Activated CD4-positive, alpha-beta memory T cell treated with anti-CD3 and anti-CD28 coated beads for 36 hours (primary cell): ENCODE measurements at regions of chr21 and their contacts with region 1.

Region 1: GRCh38 chr21:36927719-36928117 is 38.8 kb downstream of the HLCS start:
- DNase-seq: peak; percentile 84
- H3K4me3 Mint-ChIP-seq: no peak overlapping the region
- H3K27ac Mint-ChIP-seq: no peak overlapping the region
- H3K4me1 Mint-ChIP-seq: peaks cover 7% of the 10 kb centered on the region
- H3K27me3 Mint-ChIP-seq: no peaks in the 10 kb centered on the region

Region 2: DNA sequence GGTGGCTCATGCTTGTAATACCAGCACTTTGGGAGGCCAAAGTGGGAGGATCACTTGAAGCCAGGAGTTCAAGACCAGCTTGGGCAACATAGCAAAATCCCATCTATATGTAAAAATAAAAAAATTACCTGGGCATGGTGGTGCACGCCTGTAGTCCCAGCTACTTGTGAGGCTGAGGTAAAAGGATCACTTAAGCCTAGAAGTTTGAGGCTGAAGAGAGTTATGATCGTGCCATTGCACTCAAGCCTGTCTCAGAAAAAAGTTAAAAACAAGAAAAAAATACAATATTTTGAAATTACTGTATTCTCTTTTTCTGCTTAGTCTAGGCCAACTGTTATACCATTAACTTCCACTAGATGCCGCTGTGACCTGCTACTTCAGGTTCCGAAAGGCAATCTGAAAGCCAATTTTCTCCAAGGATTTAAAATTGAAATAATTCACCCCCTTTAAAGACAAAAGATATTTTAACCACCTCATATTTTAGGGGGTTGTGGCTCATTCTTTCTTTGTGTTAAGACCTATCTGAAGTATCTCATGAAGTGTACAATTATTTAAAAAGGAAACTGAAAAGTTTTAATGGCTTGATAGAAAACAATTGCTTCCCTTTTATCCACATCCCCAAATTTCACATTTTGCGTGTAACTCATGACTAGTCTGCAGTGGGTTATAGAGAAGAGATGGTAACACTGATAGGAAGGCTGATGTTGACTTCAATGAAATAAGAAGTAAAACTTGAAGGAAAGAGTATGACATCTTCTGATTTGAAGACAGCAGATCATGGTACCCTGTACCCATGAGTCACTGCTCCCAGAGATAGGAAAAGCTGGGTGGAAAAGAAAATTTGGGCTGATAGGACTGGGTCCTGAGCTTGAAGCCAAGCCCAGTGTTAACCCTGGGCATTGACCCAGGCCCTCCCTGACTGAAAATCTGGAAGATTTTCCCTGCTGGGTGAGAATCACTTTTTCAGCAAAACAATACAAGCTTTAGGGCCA is 423.4 kb before region 1 on chr21:
- CTCF ChIA-PET with region 1: interaction called, 6 read pairs
- POLR2A ChIA-PET with region 1: no interaction called
- intact Hi-C with region 1: loop called (anchors 1 kb)
- DNase-seq: peak; percentile 33
- H3K4me3 Mint-ChIP-seq: no peak overlapping the region
- H3K27ac Mint-ChIP-seq: no peak overlapping the region
- H3K4me1 Mint-ChIP-seq: no peaks in the 10 kb centered on the region
- H3K27me3 Mint-ChIP-seq: peaks cover 7% of the 10 kb centered on the region

Region 3: DNA sequence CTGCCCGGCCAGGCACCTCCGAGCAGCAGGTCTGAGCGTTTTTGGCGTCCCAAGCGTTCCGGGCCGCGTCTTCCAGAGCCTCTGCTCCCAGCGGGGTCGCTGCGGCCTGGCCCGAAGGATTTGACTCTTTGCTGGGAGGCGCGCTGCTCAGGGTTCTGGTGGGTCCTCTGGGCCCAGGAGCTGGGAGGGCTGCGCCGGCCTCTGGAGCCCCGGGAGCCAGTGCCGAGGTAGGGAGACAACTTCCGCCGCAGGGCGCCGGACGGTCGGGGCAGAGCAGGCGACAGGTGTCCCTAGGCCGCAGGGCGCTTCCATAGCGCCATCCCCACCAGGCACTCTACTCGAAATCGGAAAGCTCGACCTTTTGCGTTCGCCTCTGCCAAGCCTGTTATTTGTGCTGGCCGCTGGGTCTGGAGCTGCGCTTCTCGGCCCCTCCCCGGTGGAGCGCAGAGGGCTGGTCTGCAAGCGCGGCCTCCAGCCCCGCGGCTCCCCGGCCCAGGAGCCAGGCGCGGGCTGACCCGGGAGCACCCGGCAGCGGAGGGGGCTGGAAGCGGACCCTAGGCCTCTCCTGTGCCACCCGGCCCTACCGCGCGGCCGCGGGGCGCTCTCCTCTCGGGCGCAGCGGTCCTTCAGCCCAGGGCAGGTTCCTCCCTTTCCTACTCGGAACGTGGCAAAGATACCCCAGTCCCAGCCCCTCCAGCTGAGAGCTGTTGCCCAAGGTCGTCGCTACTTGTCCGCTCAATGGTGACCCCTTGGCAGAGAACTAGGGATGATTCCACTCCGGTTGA is 226.6 kb before region 1 on chr21:
- CTCF ChIA-PET with region 1: interaction called, 3 read pairs
- POLR2A ChIA-PET with region 1: no interaction called
- intact Hi-C with region 1: loop called (anchors 5 kb)
- DNase-seq: peak; percentile 20
- H3K4me3 Mint-ChIP-seq: peak overlapping the region; percentile 57
- H3K27ac Mint-ChIP-seq: no peak overlapping the region
- H3K4me1 Mint-ChIP-seq: peaks cover 30% of the 10 kb centered on the region
- H3K27me3 Mint-ChIP-seq: peaks cover 66% of the 10 kb centered on the region

Region 4: DNA sequence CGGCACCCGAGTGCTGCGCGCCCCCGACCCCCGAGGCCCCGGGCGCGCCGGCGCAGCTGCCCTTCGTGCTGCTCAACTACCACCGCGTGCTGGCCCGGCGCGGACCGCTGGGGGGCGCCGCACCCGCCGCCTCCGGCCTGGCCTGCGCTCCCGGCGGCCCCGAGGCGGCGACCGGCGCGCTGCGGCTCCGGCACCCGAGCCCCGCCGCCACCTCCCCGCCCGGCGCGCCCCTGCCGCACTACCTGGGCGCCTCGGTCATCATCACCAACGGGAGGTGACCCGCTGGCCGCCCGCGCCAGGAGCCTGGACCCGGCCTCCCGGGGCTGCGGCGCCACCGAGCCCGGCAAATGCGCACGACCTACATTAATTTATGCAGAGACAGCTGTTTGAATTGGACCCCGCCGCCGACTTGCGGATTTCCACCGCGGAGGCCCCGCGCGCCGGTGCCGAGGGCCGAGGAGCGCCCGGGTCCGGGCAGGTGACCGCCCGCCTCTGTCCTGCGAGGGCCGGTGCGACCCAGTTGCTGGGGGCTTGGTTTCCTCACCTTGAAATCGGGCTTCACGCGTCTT is 179.8 kb before region 1 on chr21:
- CTCF ChIA-PET with region 1: interaction called, 37 read pairs
- POLR2A ChIA-PET with region 1: no interaction called
- intact Hi-C with region 1: loop called (anchors 1 kb)
- DNase-seq: peak; percentile 68
- H3K4me3 Mint-ChIP-seq: peak overlapping the region; percentile 63
- H3K27ac Mint-ChIP-seq: no peak overlapping the region
- H3K4me1 Mint-ChIP-seq: peaks cover 15% of the 10 kb centered on the region
- H3K27me3 Mint-ChIP-seq: peaks cover 45% of the 10 kb centered on the region

Region 5: GRCh38 chr21:36873513-36873912 is 54.2 kb before region 1 on chr21:
- CTCF ChIA-PET with region 1: no interaction called
- POLR2A ChIA-PET with region 1: no interaction called
- intact Hi-C with region 1: no loop called
- DNase-seq: no peak
- H3K4me3 Mint-ChIP-seq: no peak overlapping the region
- H3K27ac Mint-ChIP-seq: no peak overlapping the region
- H3K4me1 Mint-ChIP-seq: no peaks in the 10 kb centered on the region
- H3K27me3 Mint-ChIP-seq: no peaks in the 10 kb centered on the region

Region 6: DNA sequence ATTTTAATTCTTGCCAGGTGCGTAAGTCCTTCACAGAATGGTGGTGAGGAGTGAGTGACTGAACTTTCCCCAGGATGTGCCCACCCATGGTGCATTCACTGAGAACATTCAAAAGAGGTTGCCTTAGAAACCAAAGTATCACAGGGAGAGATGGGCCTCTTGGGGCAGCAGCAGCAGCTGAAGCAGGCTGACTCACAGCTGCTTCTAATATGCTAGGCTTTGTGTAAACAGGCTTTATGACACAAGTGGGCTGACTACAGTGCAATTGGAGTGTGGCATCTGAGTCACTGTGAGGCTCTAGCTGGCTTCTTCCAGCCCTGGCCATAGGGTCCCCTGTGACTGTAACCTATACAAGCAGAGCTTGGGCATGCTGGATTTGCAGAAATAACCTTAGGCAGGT is 132.6 kb after region 1 on chr21:
- CTCF ChIA-PET with region 1: no interaction called
- POLR2A ChIA-PET with region 1: no interaction called
- intact Hi-C with region 1: no loop called
- DNase-seq: peak; percentile 43
- H3K4me3 Mint-ChIP-seq: no peak overlapping the region
- H3K27ac Mint-ChIP-seq: no peak overlapping the region
- H3K4me1 Mint-ChIP-seq: no peaks in the 10 kb centered on the region
- H3K27me3 Mint-ChIP-seq: no peaks in the 10 kb centered on the region

Region 7: DNA sequence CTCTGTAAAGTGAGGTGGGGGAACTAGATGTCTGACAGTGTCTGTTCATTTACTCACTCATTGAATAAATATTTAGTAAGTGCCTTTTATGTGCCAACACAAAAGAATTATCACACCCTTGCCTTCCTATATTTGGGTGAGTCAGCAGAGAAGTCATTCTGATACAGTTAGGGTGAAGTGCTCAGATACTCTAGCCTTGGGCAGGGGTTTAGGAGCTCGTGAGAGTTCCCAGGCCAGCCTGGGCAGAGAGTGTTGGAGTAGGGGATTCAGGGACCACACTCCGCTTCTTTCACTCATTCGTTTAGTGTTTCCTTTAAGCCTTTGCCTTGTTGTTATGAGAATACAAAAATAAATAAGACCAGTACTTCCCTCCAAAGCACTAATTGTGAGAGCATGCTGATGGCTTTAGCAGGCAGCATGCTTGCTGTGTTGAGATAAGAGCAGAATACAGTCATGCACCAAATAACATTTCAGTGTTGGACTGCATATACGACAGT is 522.8 kb after region 1 on chr21:
- CTCF ChIA-PET with region 1: no interaction called
- POLR2A ChIA-PET with region 1: no interaction called
- intact Hi-C with region 1: no loop called
- DNase-seq: peak; percentile 33
- H3K4me3 Mint-ChIP-seq: no peak overlapping the region
- H3K27ac Mint-ChIP-seq: peak overlapping the region; percentile 73
- H3K4me1 Mint-ChIP-seq: peaks cover 62% of the 10 kb centered on the region
- H3K27me3 Mint-ChIP-seq: no peaks in the 10 kb centered on the region